ENCODE measurements at regions of chr16 and their contacts with region 1.

Region 1: GRCh38 chr16:27179500-27180072 is 23.7 kb upstream of the KDM8 start:
- DNase-seq: peak; percentile 95
- ATAC-seq: peak; percentile 95
- H3K4me3 Mint-ChIP-seq: no peak overlapping the region
- H3K27ac Mint-ChIP-seq: peak overlapping the region; percentile 73
- H3K4me1 Mint-ChIP-seq: peaks cover 37% of the 10 kb centered on the region
- H3K27me3 Mint-ChIP-seq: peaks cover 8% of the 10 kb centered on the region

Region 2: DNA sequence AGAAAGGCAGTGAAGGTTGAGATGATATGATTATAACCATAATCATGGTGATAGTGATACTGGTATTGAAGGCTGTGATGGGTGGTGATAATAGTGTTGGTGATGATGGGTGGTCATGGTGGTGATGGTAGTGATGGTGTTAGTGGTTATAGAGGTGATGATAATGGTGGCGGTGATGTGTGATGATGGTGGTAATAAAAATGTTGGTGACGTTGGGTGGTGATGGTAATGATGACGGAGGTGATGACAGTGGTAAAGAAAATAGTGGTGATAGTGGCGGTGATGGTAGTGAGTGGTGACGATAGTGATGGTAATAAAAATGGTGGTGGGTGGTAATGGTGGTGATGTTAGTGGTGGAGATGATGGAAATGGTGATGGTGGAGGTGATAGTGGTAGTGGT is 41.3 kb before region 1 on chr16:
- CTCF ChIA-PET with region 1: no interaction called
- POLR2A ChIA-PET with region 1: no interaction called
- DNase-seq: no peak
- ATAC-seq: no peak
- H3K4me3 Mint-ChIP-seq: peak overlapping the region; percentile 19
- H3K27ac Mint-ChIP-seq: peak overlapping the region; percentile 85
- H3K4me1 Mint-ChIP-seq: peaks cover 3% of the 10 kb centered on the region
- H3K27me3 Mint-ChIP-seq: peaks cover 22% of the 10 kb centered on the region

Region 3: DNA sequence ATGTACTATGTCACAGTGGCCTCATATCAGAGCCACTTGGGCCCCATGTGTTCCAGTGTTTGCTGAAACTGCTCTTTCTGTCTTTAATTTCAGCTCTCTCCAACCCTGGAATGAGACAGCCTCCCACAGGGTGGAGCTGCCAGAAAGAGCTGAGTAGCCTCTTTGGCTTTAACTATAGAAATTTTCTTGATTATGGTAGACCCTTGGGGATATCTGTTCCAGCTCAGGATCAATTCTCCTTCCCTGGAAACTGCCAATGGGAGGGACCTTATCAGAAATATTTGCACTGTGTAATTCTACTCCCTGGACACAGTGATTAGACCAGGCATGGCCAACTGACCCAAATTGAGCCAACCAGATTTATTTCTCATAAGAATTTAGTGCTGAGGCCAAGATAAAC is 15.2 kb before region 1 on chr16:
- CTCF ChIA-PET with region 1: interaction called, 36 read pairs
- POLR2A ChIA-PET with region 1: no interaction called
- DNase-seq: no peak
- ATAC-seq: no peak
- H3K4me3 Mint-ChIP-seq: no peak overlapping the region
- H3K27ac Mint-ChIP-seq: no peak overlapping the region
- H3K4me1 Mint-ChIP-seq: peaks cover 11% of the 10 kb centered on the region
- H3K27me3 Mint-ChIP-seq: peaks cover 4% of the 10 kb centered on the region

Region 4: DNA sequence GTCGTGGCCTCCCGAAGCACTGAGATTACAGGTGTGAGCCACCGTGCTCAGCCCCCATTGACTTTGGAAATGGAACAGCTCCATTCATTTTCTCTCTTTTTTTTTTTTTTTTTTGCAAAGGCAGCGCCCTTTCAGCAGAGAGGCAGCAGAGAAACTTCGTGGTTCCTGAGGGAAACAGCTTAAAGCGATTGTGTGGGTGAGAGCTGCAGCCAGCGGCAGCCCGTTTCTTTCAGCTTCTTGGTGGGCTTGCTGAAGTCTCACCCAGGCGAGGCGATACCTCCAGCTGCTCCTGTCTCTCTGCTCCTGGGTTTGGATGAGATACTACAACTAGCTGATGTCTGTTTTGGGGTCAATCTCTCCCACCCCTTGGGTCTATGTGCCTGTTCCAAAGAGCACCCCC is 31.4 kb after region 1 on chr16:
- CTCF ChIA-PET with region 1: interaction called, 32 read pairs
- POLR2A ChIA-PET with region 1: no interaction called
- DNase-seq: no peak
- ATAC-seq: peak; percentile 23
- H3K4me3 Mint-ChIP-seq: no peak overlapping the region
- H3K27ac Mint-ChIP-seq: peak overlapping the region; percentile 74
- H3K4me1 Mint-ChIP-seq: peaks cover 13% of the 10 kb centered on the region
- H3K27me3 Mint-ChIP-seq: no peaks in the 10 kb centered on the region

Region 5: DNA sequence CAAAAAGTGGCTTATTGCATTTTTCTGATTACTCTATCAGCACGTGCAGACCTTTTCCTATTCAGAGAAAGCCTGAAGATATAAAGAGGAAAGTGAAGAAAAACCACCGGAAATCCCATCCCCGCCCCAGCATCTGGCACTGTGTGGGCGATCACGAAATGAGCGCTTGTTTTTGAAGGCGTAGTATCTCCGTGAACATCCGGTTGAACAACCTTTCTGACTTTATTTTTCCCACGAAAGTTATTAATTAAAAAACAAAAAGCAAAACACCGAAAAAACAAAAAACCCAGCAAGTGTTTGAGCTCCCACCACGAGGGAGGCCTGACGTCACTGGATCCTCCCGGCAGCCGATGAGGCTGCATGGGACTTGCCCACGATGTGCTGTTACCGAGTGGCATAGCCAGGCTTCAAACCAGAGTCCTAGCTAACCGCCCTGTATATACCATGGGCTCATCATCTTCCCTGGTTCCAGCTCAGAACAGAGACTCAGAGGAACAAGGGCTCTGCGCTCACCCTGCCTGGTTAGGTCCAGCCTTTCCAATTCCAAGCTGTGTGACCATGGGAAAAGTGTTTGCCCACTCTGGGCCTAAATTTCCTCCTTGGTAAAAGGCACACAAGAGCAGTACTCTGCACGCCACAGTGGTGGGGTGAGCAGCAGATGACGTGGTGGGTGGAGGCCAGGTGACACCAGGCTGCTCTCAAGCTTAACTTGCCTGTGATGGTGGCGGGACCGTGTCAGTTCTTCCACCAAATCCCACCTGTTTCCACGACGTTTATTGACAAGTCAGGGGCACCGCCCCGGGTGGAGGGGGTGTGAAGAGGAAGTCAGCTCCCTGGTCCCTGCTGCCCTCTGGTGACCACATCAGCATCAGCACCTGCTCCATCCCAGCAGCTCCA is 188.1 kb after region 1 on chr16:
- CTCF ChIA-PET with region 1: interaction called, 96 read pairs
- POLR2A ChIA-PET with region 1: interaction called, 19 read pairs
- DNase-seq: peak; percentile 93
- ATAC-seq: peak; percentile 82
- H3K4me3 Mint-ChIP-seq: peak overlapping the region; percentile 66
- H3K27ac Mint-ChIP-seq: peak overlapping the region; percentile 99
- H3K4me1 Mint-ChIP-seq: peaks cover 77% of the 10 kb centered on the region
- H3K27me3 Mint-ChIP-seq: no peaks in the 10 kb centered on the region

Region 6: GRCh38 chr16:27401768-27402568 is 222.4 kb after region 1 on chr16 and contains the start of gene IL21R:
- CTCF ChIA-PET with region 1: interaction called, 14 read pairs
- POLR2A ChIA-PET with region 1: interaction called, 3 read pairs
- DNase-seq: peak; percentile 90
- ATAC-seq: peak; percentile 81
- H3K4me3 Mint-ChIP-seq: peak within 1 kb of the TSS; percentile 97
- H3K27ac Mint-ChIP-seq: peak within 1 kb of the TSS; percentile 94
- H3K4me1 Mint-ChIP-seq: peaks cover 68% of the 10 kb centered on the region
- H3K27me3 Mint-ChIP-seq: no peaks in the 10 kb centered on the region
- total RNA-seq, gene IL21R: 23.5 to 24.2 TPM

Region 7: DNA sequence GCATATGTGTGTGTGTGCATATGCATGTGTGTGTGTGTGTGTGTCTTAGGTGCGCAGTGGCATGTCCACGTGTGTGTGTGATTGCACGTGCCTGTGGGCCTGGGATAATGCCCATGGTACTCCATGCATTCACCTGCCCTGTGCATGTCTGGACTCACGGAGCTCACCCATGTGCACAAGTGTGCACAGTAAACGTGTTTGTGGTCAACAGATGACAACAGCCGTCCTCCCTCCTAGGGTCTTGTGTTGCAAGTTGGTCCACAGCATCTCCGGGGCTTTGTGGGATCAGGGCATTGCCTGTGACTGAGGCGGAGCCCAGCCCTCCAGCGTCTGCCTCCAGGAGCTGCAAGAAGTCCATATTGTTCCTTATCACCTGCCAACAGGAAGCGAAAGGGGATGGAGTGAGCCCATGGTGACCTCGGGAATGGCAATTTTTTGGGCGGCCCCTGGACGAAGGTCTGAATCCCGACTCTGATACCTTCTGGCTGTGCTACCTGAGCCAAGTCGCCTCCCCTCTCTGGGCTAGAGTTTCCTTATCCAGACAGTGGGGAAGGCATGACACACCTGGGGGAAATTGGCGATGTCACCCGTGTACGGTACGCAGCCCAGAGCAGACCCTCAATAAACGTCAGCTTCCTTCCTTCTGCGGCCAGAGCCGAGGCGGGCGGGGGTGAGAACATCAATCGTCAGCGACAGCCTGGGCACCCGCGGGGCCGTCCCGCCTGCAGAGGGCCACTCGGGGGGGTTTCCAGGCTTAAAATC is 270.0 kb after region 1 on chr16:
- CTCF ChIA-PET with region 1: interaction called, 14 read pairs
- POLR2A ChIA-PET with region 1: no interaction called
- DNase-seq: peak; percentile 88
- ATAC-seq: peak; percentile 71
- H3K4me3 Mint-ChIP-seq: peak overlapping the region; percentile 72
- H3K27ac Mint-ChIP-seq: peak overlapping the region; percentile 95
- H3K4me1 Mint-ChIP-seq: peaks cover 71% of the 10 kb centered on the region
- H3K27me3 Mint-ChIP-seq: no peaks in the 10 kb centered on the region

Measured in activated CD8-positive, alpha-beta T cell treated with anti-CD3 and anti-CD28 coated beads, Interleukin-2, amount 10 ng/mL, durations not matched to agents 7 days and 5 days (primary cell).